HEK293T (cell line): ENCODE measurements at regions of chrX and their contacts with region 1.

Region 1: GRCh38 chrX:133792198-133792953 is 193.0 kb downstream of the GPC3 start:
- DNase-seq: peak; percentile 85

Region 2: DNA sequence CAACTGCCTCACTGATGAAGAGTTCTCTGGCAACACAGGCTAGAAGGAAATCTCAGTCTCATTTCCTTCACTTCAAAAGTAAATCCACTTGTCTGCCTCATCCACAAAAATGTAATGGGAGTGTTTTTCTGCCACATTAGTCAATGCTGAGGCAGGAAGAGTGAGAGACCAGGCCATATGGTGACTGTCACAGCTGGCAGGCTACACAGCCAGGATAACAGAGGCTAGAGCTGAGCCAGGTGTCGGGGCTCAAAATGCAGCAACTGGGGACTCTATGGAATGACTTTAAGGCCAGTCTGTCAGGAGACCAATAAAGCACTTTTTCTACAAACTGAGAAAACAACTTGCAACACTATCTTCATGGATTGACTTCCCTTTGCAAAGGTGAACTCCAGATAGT is 11.2 kb before region 1 on chrX:
- CTCF ChIA-PET with region 1: interaction called, 13 read pairs
- POLR2A ChIA-PET with region 1: no interaction called
- DNase-seq: no peak

Region 3: GRCh38 chrX:133813971-133814370 is 21.6 kb after region 1 on chrX:
- CTCF ChIA-PET with region 1: interaction called, 12 read pairs
- POLR2A ChIA-PET with region 1: no interaction called
- DNase-seq: no peak

Region 4: GRCh38 chrX:133921764-133922389 is 129.5 kb after region 1 on chrX:
- CTCF ChIA-PET with region 1: interaction called, 23 read pairs
- POLR2A ChIA-PET with region 1: no interaction called
- DNase-seq: peak; percentile 81

Region 5: GRCh38 chrX:134020910-134021309 is 228.5 kb after region 1 on chrX:
- CTCF ChIA-PET with region 1: interaction called, 46 read pairs
- POLR2A ChIA-PET with region 1: no interaction called
- DNase-seq: no peak

Region 6: DNA sequence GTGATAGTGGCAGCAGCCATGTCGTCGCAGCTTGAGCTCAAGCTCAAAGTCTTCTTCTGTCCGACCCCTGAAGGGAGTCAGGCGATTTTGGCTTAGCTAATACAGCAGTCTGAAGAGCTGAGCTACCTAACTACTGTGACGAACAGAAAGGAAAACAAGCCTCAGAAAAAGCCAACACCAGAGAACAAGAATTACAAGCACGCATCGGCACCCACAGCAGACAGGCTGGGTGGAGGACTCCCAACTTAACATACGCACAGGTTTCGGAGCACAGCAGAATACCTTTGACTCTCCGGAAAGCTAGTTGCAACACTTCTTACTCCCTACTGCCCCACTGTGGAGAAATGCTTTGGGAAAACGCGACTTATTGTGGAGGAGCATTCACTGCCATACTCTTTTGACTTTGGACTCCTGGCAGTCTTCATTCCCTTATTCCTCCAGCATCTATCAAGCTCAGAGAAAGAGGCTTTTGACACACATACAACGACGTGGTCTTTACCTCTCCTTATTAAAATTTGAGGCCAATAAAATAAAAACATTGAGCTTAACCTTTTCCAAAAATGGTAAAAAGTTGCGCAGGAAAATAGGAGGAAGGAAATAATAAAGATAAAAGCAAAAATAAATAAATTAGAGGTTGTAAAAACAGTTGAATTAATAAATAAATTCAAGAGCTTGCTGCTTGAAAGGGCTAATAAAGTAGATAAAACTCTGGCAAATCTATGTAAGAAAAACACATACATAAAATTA is 234.4 kb after region 1 on chrX:
- CTCF ChIA-PET with region 1: interaction called, 46 read pairs
- POLR2A ChIA-PET with region 1: no interaction called
- DNase-seq: peak; percentile 73